ENCODE measurements at regions of chr6 and their contacts with region 1.

Region 1: GRCh38 chr6:110398778-110399177 is 16.6 kb downstream of the DDO start:
- DNase-seq: no peak
- H3K4me3 ChIP-seq: no peak overlapping the region
- H3K27ac ChIP-seq: peak overlapping the region in 1 of 2 donors; percentile 36
- H3K4me1 ChIP-seq: peaks cover 3% of the 10 kb centered on the region
- H3K27me3 ChIP-seq: no peaks in the 10 kb centered on the region
- CTCF ChIP-seq: no peak
- POLR2A ChIP-seq: no peak

Region 2: GRCh38 chr6:110039364-110039980 is 359.3 kb before region 1 on chr6:
- intact Hi-C with region 1: loop called (anchors 10 kb)
- DNase-seq: peak; percentile 94
- H3K4me3 ChIP-seq: peak overlapping the region; percentile 21 to 57
- H3K27ac ChIP-seq: peak overlapping the region; percentile 36 to 48
- H3K4me1 ChIP-seq: peaks cover 6% of the 10 kb centered on the region
- H3K27me3 ChIP-seq: no peaks in the 10 kb centered on the region
- CTCF ChIP-seq: peak; percentile 86 to 93 (median 90)
- POLR2A ChIP-seq: no peak

Region 3: GRCh38 chr6:110179401-110180227 is 219.2 kb before region 1 on chr6 and contains the start of gene WASF1:
- intact Hi-C with region 1: loop called (anchors 10 kb)
- DNase-seq: peak; percentile 98
- H3K4me3 ChIP-seq: peak within 1 kb of the TSS; percentile 80 to 96
- H3K27ac ChIP-seq: peak within 1 kb of the TSS; percentile 76 to 92
- H3K4me1 ChIP-seq: peaks cover 26% of the 10 kb centered on the region
- H3K27me3 ChIP-seq: no peaks in the 10 kb centered on the region
- CTCF ChIP-seq: peak in 1 of 3 experiments; percentile 14
- POLR2A ChIP-seq: no peak
- total RNA-seq, gene WASF1: 102 to 204 TPM

Region 4: DNA sequence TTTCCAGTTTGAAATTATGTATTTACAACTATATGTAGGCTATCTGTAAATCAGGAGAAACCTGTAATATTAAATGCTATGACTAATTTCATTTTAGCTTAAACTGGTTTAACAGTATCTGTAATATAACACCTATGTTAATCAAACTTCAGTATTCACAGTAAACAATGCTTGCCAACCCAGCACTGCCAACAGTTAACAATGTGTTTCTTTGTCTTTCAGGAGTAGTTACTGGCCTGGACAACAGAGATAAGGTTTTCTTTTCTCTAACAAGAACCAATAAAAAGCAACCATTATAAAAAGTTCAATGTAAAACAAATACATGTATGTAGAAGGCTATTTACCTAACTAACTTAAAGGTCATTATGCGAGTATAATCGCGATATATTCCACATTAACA is 257.7 kb after region 1 on chr6:
- intact Hi-C with region 1: no loop called
- DNase-seq: peak; percentile 46
- H3K4me3 ChIP-seq: no peak overlapping the region
- H3K27ac ChIP-seq: peak overlapping the region; percentile 3 to 24
- H3K4me1 ChIP-seq: peaks cover 3% of the 10 kb centered on the region
- H3K27me3 ChIP-seq: no peaks in the 10 kb centered on the region
- CTCF ChIP-seq: no peak
- POLR2A ChIP-seq: no peak

Region 5: GRCh38 chr6:110841266-110841665 is 442.5 kb after region 1 on chr6:
- intact Hi-C with region 1: no loop called
- DNase-seq: no peak
- H3K4me3 ChIP-seq: no peak overlapping the region
- H3K27ac ChIP-seq: no peak overlapping the region
- H3K4me1 ChIP-seq: no peaks in the 10 kb centered on the region
- H3K27me3 ChIP-seq: no peaks in the 10 kb centered on the region
- CTCF ChIP-seq: no peak
- POLR2A ChIP-seq: no peak